ENCODE measurements at regions of chr9 and their contacts with region 1.

Region 1: GRCh38 chr9:32487981-32488380 is 38.0 kb downstream of the RIGI start:
- DNase-seq: no peak
- H3K4me3 Mint-ChIP-seq: no peak overlapping the region
- H3K27ac Mint-ChIP-seq: no peak overlapping the region
- H3K4me1 Mint-ChIP-seq: no peaks in the 10 kb centered on the region
- H3K27me3 Mint-ChIP-seq: no peaks in the 10 kb centered on the region

Region 2: GRCh38 chr9:32472344-32472743 is 15.6 kb before region 1 on chr9:
- CTCF ChIA-PET with region 1: no interaction called
- intact Hi-C with region 1: loop called (anchors 2 kb)
- DNase-seq: no peak
- H3K4me3 Mint-ChIP-seq: no peak overlapping the region
- H3K27ac Mint-ChIP-seq: no peak overlapping the region
- H3K4me1 Mint-ChIP-seq: no peaks in the 10 kb centered on the region
- H3K27me3 Mint-ChIP-seq: no peaks in the 10 kb centered on the region